ENCODE measurements at regions of chr4 and their contacts with region 1.

Region 1: DNA sequence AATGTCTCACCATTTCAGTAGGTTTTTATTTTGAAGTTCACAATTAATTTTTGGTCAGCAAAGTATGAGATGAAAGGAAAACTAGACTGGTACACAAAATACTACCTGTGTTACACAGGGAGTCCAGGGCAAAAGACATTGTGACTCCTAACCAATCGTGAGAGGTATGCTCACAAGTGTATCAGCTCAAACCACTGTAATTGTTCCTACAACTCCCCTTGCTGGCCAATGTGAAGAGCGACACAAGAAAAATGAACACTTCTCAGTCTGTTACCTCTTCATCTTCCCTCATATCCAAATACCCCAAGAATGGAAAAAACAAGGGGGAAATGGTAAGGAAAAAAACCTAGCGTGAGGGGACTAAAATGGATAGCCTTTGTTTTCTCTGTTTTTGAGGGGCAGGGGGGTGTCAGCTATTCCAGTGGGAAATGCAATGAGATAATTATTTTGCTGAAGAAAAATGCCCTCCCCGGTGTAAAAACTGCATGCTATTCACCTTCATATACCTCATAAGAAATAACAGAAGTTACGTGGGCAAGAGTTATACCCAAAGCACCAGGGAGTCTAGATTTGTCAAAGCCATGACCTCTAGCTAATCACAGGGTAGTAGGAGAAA is 30.6 kb upstream of the NSUN7 start:
- DNase-seq: no peak
- H3K4me3 Mint-ChIP-seq: no peak overlapping the region
- H3K27ac Mint-ChIP-seq: no peak overlapping the region
- H3K4me1 Mint-ChIP-seq: peaks cover 10% of the 10 kb centered on the region
- H3K27me3 Mint-ChIP-seq: peaks cover 2% of the 10 kb centered on the region

Region 2: DNA sequence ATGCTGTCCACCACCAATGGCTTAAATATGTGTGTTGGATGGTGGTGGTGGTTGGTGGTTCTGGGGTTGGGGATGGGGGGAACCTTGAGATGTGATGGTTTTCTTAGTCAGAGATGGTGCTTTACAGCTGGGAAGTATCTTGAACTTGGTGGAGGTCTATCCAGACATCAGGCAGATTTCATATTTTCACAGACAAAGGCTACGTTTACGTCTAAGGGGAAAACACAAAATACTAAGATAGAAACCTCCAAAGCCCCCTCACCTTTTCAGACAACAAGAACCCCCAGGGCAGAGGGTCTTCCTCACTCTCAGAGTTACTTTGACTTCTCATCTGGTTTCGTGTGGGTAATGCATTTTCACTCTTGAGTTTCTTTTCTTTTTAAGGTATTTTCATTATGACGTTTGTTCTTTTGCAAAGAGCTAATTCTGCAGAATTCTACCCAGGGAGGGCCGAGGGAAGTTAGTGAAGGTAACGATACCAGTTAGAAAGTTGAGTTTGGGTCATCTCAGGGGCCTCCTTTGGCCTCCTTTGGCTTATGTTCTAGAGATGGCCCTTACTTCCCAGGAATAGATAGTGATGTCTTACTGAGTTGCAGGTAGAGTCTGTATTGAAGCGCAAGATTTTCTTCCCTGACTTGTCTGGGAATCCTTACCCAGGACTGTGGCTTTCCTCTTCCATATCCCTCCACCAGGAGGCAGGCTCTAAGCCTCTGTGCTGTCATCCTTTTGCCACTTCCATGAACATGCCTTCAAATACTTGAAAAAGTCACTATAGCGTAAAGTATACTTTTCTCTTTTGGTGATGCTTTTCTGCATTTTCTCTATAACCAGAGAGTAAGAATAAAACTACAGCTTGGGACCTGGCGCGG is 490.4 kb before region 1 on chr4:
- CTCF ChIA-PET with region 1: no interaction called
- POLR2A ChIA-PET with region 1: no interaction called
- intact Hi-C with region 1: loop called (anchors 10 kb)
- DNase-seq: peak; percentile 56
- H3K4me3 Mint-ChIP-seq: peak overlapping the region; percentile 58
- H3K27ac Mint-ChIP-seq: peak overlapping the region; percentile 92
- H3K4me1 Mint-ChIP-seq: peaks cover 93% of the 10 kb centered on the region
- H3K27me3 Mint-ChIP-seq: no peaks in the 10 kb centered on the region

Region 3: DNA sequence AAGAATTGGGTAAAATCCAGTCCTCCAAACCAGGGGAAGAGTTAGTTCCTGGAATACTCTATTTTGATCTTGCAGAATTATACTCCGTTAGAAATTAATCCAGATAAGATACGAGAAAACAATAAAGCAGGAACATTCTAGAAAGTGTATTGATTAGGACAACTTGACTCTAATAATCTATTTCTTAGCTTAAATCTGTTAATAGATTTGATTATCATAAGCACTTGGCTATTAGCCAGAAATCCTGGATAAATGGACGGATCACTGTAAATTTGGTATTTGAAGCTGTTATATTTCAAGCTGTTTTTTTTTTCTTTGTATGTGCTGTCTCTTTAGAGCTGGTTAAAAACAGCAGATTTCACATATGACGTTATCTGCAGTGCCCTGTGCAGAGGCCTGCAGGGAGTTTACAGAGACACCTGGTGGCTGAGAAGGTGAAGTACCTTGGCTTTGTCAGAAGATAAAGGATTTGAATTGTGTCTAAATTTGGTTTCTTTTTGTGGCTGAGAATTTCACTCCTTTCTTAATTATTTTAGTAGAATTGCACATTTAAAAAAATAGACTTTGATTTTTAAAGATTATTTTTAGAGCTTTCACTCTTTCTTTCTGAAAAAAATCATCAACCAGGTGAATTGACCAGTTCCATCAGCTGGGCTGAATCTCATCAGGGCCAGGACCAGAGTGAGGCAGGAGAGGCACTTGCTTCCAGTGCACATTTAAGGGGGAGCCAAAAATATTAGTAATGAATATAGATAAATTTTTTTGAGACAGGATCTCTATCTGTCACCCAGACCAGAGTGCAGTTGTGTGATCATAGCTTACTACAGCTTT is 393.7 kb before region 1 on chr4:
- CTCF ChIA-PET with region 1: interaction called, 10 read pairs
- POLR2A ChIA-PET with region 1: no interaction called
- intact Hi-C with region 1: no loop called
- DNase-seq: peak; percentile 75
- H3K4me3 Mint-ChIP-seq: no peak overlapping the region
- H3K27ac Mint-ChIP-seq: no peak overlapping the region
- H3K4me1 Mint-ChIP-seq: peaks cover 18% of the 10 kb centered on the region
- H3K27me3 Mint-ChIP-seq: no peaks in the 10 kb centered on the region

Region 4: GRCh38 chr4:40486534-40486933 is 232.6 kb before region 1 on chr4:
- CTCF ChIA-PET with region 1: no interaction called
- POLR2A ChIA-PET with region 1: no interaction called
- intact Hi-C with region 1: no loop called
- DNase-seq: no peak
- H3K4me3 Mint-ChIP-seq: no peak overlapping the region
- H3K27ac Mint-ChIP-seq: no peak overlapping the region
- H3K4me1 Mint-ChIP-seq: no peaks in the 10 kb centered on the region
- H3K27me3 Mint-ChIP-seq: peaks cover 12% of the 10 kb centered on the region

Region 5: GRCh38 chr4:40550948-40551462 is 168.1 kb before region 1 on chr4:
- CTCF ChIA-PET with region 1: no interaction called
- POLR2A ChIA-PET with region 1: no interaction called
- intact Hi-C with region 1: loop called (anchors 5 kb)
- DNase-seq: no peak
- H3K4me3 Mint-ChIP-seq: peak overlapping the region; percentile 49
- H3K27ac Mint-ChIP-seq: no peak overlapping the region
- H3K4me1 Mint-ChIP-seq: peaks cover 22% of the 10 kb centered on the region
- H3K27me3 Mint-ChIP-seq: no peaks in the 10 kb centered on the region

Region 6: GRCh38 chr4:40662962-40663604 is 56.0 kb before region 1 on chr4:
- CTCF ChIA-PET with region 1: no interaction called
- POLR2A ChIA-PET with region 1: no interaction called
- intact Hi-C with region 1: loop called (anchors 1 kb)
- DNase-seq: peak; percentile 79
- H3K4me3 Mint-ChIP-seq: no peak overlapping the region
- H3K27ac Mint-ChIP-seq: peak overlapping the region; percentile 75
- H3K4me1 Mint-ChIP-seq: peaks cover 27% of the 10 kb centered on the region
- H3K27me3 Mint-ChIP-seq: peaks cover 3% of the 10 kb centered on the region

Region 7: GRCh38 chr4:40687676-40688389 is 31.3 kb before region 1 on chr4:
- CTCF ChIA-PET with region 1: interaction called, 3 read pairs
- POLR2A ChIA-PET with region 1: no interaction called
- intact Hi-C with region 1: loop called (anchors 1 kb)
- DNase-seq: no peak
- H3K4me3 Mint-ChIP-seq: no peak overlapping the region
- H3K27ac Mint-ChIP-seq: peak overlapping the region; percentile 76
- H3K4me1 Mint-ChIP-seq: peaks cover 14% of the 10 kb centered on the region
- H3K27me3 Mint-ChIP-seq: peaks cover 11% of the 10 kb centered on the region

Region 8: DNA sequence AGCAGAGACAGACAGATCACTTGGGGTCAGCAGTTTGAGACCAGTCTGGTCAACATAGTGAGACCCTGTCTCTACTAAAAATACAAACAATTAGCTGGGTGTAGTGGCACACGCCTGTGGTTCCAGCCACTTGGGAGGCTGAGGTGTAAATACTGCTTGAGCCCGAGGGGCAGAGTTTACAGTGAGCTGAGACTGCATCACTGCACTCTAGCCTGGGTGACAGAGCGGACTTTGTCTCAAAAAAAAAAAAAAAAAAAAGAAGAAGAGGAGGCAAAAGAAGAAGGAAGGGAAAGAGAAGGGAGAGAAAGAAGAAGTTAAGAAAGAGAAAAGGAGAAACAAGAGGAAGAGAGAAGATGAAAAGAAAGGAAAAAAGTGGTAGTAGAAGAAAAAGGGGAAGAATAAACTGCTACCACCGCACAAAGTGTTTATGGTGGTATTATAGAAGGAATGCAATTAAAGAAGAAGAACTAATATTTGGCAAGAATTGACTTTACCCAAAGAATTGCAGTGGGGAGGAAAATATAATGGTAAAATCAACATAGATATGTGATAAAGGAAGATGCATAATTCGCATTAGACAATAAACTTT is 11.1 kb after region 1 on chr4:
- CTCF ChIA-PET with region 1: no interaction called
- POLR2A ChIA-PET with region 1: no interaction called
- intact Hi-C with region 1: no loop called
- DNase-seq: no peak
- H3K4me3 Mint-ChIP-seq: no peak overlapping the region
- H3K27ac Mint-ChIP-seq: no peak overlapping the region
- H3K4me1 Mint-ChIP-seq: peaks cover 8% of the 10 kb centered on the region
- H3K27me3 Mint-ChIP-seq: peaks cover 12% of the 10 kb centered on the region

Region 9: GRCh38 chr4:40763228-40763716 is 44.2 kb after region 1 on chr4:
- CTCF ChIA-PET with region 1: no interaction called
- POLR2A ChIA-PET with region 1: no interaction called
- intact Hi-C with region 1: loop called (anchors 1 kb)
- DNase-seq: peak; percentile 76
- H3K4me3 Mint-ChIP-seq: no peak overlapping the region
- H3K27ac Mint-ChIP-seq: peak overlapping the region; percentile 16
- H3K4me1 Mint-ChIP-seq: peaks cover 11% of the 10 kb centered on the region
- H3K27me3 Mint-ChIP-seq: peaks cover 4% of the 10 kb centered on the region

Region 10: GRCh38 chr4:41257257-41257901 is 538.3 kb after region 1 on chr4:
- CTCF ChIA-PET with region 1: no interaction called
- POLR2A ChIA-PET with region 1: no interaction called
- intact Hi-C with region 1: no loop called
- DNase-seq: peak; percentile 46
- H3K4me3 Mint-ChIP-seq: peak overlapping the region; percentile 62
- H3K27ac Mint-ChIP-seq: no peak overlapping the region
- H3K4me1 Mint-ChIP-seq: peaks cover 10% of the 10 kb centered on the region
- H3K27me3 Mint-ChIP-seq: peaks cover 35% of the 10 kb centered on the region

Measured in activated CD4-positive, alpha-beta memory T cell treated with anti-CD3 and anti-CD28 coated beads for 36 hours (primary cell).